PC-9 (cell line): ENCODE measurements at regions of chr7 and their contacts with region 1.

Region 1: DNA sequence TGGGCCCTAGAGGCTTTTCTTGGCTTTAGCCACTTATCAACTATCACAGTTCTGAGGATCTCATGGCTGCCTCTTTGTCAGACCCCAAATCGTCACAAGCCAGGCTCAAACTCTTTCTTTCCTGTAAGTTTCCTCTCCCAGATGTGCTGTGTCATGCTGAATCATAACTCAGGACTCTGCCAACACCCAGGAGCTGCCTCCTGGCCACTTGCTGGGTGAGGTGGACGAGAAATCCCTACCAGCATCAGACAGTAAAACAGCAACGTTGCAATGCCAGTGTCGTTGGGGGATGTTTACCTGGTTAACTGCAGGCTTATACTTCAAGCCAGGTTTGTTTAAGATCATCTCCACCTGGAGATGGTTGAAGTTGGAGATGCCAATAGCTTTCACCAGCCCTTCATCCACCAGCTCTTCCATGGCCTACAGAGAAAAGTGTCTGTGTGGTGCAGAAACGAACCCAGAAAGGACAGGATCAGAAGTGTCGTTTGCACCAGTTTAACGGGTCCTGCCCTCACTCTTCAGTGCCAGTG is 10.1 kb downstream of the AKR1B1 start:
- DNase-seq: peak; percentile 84 to 91
- H3K4me3 ChIP-seq: no peak overlapping the region; the same call in 1 of the 2 replicates
- H3K27ac ChIP-seq: peak overlapping the region; percentile 97
- H3K4me1 ChIP-seq: peaks cover 61% of the 10 kb centered on the region
- H3K27me3 ChIP-seq: no peaks in the 10 kb centered on the region
- CTCF ChIP-seq: no peak

Region 2: DNA sequence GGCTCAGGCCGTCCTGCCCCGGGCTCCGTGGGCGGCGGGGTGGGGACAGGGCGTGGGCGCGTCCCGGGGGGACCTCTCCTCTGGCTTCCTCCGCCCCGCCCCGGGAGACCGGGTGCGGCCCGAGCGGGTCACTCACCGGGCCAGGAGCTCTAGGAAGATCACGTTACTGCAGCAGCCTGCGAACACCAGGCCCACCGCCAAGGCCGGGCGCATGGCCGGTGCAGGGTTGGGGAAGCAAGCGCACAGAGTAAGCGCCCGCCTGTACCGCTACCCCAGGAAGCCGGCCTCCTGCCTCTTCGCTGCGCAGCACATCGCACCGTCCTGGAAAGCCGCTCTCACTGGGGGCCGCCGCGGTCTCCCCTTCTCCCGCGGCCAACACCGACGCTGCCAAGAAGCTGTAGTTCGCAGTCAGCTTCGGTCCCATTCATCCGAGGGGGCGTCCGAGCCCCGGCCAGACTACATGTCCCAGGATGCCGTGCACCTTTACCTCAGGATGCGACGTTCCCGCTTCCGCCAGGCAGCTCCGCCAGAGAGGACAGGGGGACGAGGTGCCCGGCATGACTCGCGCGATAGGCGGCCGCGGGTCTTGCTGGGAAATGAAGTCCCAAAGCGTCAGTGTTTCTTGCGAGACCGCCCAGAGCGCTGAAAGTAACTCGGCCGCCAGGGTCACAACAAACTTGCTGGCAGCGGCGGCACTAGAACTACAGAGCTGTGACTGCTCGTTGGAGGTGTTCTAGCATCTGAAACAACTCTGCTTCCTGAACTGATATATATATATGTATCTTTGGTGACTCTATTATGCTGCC is 132.0 kb before region 1 on chr7 and contains the start of gene SLC35B4:
- CTCF ChIA-PET with region 1: no interaction called
- POLR2A ChIA-PET with region 1: no interaction called
- intact Hi-C with region 1: no loop called
- DNase-seq: peak; percentile 96
- H3K4me3 ChIP-seq: peak within 1 kb of the TSS; percentile 78
- H3K27ac ChIP-seq: no peak within 1 kb of the TSS
- H3K4me1 ChIP-seq: peaks cover 14% of the 10 kb centered on the region
- H3K27me3 ChIP-seq: no peaks in the 10 kb centered on the region
- CTCF ChIP-seq: no peak; the same call in 1 of the 2 replicates
- total RNA-seq, gene SLC35B4: 16.7 and 17.9 TPM in 2 replicates

Region 3: DNA sequence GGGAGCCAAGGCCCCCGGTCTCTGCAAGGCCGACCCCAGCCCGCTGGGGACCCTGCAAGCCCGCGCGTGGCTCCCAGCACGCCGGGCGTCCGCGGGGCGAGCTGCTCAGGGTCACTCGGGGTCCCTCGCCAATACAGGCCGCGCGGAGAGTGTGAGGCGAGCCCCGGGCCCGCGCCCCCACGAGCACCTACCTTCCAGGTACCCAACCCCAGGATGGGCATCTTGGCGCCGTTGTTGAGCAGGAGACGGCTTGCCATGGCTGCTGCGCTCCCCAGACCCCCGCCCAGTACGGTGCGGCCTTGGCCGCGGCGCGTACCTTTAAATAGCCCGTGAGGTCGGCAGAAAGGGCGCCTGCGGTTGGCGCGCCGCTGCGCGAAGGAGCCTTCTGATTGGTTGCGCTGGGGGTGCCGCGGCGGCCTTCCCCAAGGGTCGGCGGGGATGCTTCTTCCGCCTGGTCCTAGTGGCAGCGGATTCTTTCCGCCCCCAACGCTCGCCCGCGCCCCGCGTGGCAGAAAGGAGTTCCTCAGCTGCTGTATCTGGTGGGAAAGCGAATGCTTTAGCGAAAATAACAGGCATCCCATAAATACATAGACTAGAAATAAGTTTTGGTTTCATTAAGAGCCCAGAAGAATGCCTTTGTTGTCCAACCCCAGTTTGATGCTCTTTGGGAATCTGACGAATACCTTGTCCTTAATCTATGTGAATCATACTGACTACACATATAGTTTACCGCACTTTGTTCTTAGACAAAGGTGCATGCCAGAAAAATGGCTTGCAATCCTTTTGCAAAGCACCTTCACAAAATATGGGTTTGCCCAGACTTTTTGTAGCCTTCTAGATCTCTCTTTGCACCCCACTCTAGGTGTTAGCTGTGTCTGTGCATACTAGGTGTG is 10.3 kb after region 1 on chr7 and contains the start of gene AKR1B1:
- CTCF ChIA-PET with region 1: no interaction called
- POLR2A ChIA-PET with region 1: no interaction called
- intact Hi-C with region 1: loop called (anchors 1 kb)
- DNase-seq: peak; percentile 88 to 95
- H3K4me3 ChIP-seq: peak within 1 kb of the TSS; percentile 93
- H3K27ac ChIP-seq: peak within 1 kb of the TSS; percentile 97
- H3K4me1 ChIP-seq: peaks cover 74% of the 10 kb centered on the region
- H3K27me3 ChIP-seq: no peaks in the 10 kb centered on the region
- CTCF ChIP-seq: peak; percentile 36; the same call in 1 of the 2 replicates
- total RNA-seq, gene AKR1B1: 1,009 and 1,328 TPM in 2 replicates

Region 4: GRCh38 chr7:134480736-134481135 is 32.0 kb after region 1 on chr7:
- CTCF ChIA-PET with region 1: no interaction called
- POLR2A ChIA-PET with region 1: interaction called, 18 read pairs
- intact Hi-C with region 1: no loop called
- DNase-seq: peak; percentile 59 to 94
- H3K4me3 ChIP-seq: peak overlapping the region; percentile 37; the same call in 1 of the 2 replicates
- H3K27ac ChIP-seq: peak overlapping the region; percentile 88
- H3K4me1 ChIP-seq: peaks cover 65% of the 10 kb centered on the region
- H3K27me3 ChIP-seq: no peaks in the 10 kb centered on the region
- CTCF ChIP-seq: no peak